BJ (cell line): ENCODE measurements at regions of chr1 and their contacts with region 1.

Region 1: GRCh38 chr1:160219062-160219929 is 14.1 kb downstream of the PEA15 start:
- DNase-seq: peak; percentile 50
- H3K4me3 ChIP-seq: no peak overlapping the region
- H3K27me3 ChIP-seq: no peaks in the 10 kb centered on the region
- CTCF ChIP-seq: peak; percentile 74

Region 2: DNA sequence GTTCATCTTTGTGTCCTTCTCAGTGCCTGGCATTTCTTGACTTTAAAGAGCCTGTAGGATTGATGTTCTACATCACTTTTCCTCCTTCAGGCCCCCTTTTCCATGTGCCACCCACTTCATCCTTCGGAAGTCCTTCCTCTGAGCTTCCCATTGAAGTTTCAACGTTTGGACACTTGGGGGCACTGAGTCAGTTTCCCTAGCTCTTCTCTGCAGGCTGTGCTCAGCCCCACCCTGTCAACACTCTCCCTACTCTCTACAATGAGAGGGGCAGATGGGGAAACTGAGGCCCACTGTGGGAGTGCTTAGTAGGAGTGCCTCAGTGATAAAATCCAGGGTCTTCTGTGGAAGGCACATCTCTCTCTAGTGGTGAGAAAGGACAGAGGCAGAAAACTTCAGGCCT is 161.2 kb before region 1 on chr1:
- CTCF ChIA-PET with region 1: no interaction called
- POLR2A ChIA-PET with region 1: no interaction called
- DNase-seq: no peak
- H3K4me3 ChIP-seq: no peak overlapping the region
- H3K27me3 ChIP-seq: peaks cover 27% of the 10 kb centered on the region
- CTCF ChIP-seq: peak; percentile 50

Region 3: GRCh38 chr1:160205242-160206035 is 13.9 kb before region 1 on chr1 and contains the start of gene PEA15:
- CTCF ChIA-PET with region 1: interaction called, 45 read pairs
- POLR2A ChIA-PET with region 1: interaction called, 4 read pairs
- DNase-seq: no peak
- H3K4me3 ChIP-seq: peak within 1 kb of the TSS; percentile 97
- H3K27me3 ChIP-seq: no peaks in the 10 kb centered on the region
- CTCF ChIP-seq: no peak
- polyA plus RNA-seq, gene PEA15: 937 and 1,035 TPM in 2 replicates

Region 4: GRCh38 chr1:160244209-160244608 is 24.9 kb after region 1 on chr1:
- CTCF ChIA-PET with region 1: interaction called, 20 read pairs
- POLR2A ChIA-PET with region 1: no interaction called
- DNase-seq: no peak
- H3K4me3 ChIP-seq: no peak overlapping the region
- H3K27me3 ChIP-seq: no peaks in the 10 kb centered on the region
- CTCF ChIP-seq: no peak

Region 5: DNA sequence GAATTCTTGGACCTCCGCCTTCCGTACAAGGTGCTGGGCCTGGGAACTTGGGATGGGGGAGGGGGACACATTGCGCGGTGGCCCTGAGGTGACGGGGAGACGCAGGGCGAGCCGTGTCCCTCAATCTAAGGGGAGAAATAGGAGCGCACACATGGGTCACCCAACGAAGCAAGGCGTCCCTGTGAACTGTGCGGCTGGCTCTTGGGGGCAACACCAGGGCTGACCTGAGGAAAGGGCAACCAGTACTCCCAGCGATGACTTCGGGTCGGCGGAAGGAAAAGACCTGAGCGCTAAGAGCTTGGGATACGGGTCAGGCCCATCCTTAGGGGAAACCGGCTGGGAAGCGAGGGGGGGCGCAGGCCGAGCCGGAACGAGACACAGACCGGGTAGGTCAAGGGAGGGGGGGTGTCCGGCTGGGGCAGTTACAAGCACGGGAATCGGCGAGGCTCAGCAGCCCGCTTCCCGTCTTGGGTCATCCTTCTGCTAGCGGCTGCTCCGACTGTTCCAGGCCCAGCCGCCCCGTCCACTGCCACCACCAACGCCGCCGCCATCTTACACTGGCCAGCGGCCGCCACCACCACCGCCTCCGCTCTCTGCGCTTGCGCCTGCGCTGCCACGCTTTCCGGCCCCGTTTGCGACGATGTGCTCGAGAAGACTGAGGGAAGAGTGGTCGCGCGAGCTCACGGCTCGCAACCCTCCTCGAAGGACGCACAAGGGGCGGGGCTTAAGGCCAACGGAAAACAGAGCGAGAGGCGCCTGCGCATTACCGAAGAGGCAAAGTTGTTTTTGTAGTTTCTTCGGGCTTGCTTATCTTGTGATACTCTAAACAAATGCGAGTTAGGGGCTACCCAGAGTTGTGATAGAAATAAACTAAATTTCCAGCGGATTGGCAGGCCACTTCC is 42.8 kb after region 1 on chr1 and contains the start of gene DCAF8:
- CTCF ChIA-PET with region 1: interaction called, 13 read pairs
- POLR2A ChIA-PET with region 1: no interaction called
- DNase-seq: peak; percentile 84
- H3K4me3 ChIP-seq: peak within 1 kb of the TSS; percentile 90
- H3K27me3 ChIP-seq: no peaks in the 10 kb centered on the region
- CTCF ChIP-seq: no peak
- polyA plus RNA-seq, gene DCAF8: 84.0 and 87.3 TPM in 2 replicates

Region 6: DNA sequence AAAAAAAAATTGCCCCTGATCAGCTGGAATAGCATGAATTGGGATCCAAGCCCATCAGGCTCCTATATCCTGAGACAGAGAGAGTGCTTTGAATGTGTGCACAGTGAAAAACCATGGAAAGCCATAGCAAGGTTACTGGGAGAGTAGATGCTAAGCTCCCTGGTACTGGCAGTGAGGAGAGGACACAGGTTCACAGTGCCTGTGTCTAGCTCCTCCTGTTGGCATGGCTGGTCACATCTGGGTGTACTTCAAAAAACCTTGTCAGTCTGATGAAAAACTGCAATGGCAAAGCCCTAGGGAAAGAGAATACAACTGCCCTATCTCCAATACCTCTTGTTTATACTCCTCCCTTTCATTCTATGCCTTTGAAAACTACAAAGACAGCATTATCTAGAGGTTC is 110.8 kb after region 1 on chr1:
- CTCF ChIA-PET with region 1: no interaction called
- POLR2A ChIA-PET with region 1: no interaction called
- DNase-seq: no peak
- H3K4me3 ChIP-seq: no peak overlapping the region
- H3K27me3 ChIP-seq: no peaks in the 10 kb centered on the region
- CTCF ChIP-seq: no peak

Region 7: DNA sequence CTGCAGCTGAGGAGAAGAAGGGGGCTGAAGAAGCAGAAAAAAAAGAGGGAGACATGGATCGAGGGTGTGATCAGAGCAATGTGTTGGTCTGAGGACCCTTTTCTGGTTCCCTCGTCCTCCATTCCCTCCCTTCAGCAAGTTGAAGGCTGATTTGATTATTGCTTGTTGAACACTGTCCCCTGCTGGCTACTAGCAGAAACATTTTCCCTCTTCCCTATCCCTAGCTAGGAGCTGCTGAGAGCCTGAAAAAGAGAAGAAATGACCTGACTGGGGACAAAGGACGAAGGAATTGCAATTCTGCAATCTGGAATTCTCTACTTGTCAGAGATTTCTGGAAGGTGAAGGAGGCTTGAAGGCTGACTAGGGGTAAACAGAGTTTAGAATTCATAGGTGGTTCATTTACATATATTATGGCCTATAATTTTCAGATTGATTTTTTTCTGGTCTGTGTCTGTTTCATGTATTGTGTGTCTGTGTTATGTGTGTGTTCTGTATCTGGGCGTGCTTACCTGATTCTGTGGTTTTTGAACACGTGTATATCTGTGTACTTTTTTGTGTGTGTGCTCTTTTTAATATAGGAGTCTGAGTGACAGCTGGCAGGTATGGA is 157.3 kb after region 1 on chr1:
- CTCF ChIA-PET with region 1: interaction called, 12 read pairs
- POLR2A ChIA-PET with region 1: no interaction called
- DNase-seq: no peak
- H3K4me3 ChIP-seq: no peak overlapping the region
- H3K27me3 ChIP-seq: no peaks in the 10 kb centered on the region; the same call in 1 of the 2 replicates
- CTCF ChIP-seq: peak; percentile 97